Vagina (tissue), 2 donors: ENCODE measurements at regions of chr14 and their contacts with region 1.

Region 1: GRCh38 chr14:54773171-54773975 is 129.3 kb downstream of the GCH1 start:
- DNase-seq: peak in 1 of 2 donors; percentile 98
- H3K4me3 ChIP-seq: no peak overlapping the region
- H3K27ac ChIP-seq: peak overlapping the region; percentile 86
- H3K4me1 ChIP-seq: peaks cover 18% of the 10 kb centered on the region
- H3K27me3 ChIP-seq: no peaks in the 10 kb centered on the region
- CTCF ChIP-seq: peak; percentile 57 to 94 (median 63)
- POLR2A ChIP-seq: no peak

Region 2: DNA sequence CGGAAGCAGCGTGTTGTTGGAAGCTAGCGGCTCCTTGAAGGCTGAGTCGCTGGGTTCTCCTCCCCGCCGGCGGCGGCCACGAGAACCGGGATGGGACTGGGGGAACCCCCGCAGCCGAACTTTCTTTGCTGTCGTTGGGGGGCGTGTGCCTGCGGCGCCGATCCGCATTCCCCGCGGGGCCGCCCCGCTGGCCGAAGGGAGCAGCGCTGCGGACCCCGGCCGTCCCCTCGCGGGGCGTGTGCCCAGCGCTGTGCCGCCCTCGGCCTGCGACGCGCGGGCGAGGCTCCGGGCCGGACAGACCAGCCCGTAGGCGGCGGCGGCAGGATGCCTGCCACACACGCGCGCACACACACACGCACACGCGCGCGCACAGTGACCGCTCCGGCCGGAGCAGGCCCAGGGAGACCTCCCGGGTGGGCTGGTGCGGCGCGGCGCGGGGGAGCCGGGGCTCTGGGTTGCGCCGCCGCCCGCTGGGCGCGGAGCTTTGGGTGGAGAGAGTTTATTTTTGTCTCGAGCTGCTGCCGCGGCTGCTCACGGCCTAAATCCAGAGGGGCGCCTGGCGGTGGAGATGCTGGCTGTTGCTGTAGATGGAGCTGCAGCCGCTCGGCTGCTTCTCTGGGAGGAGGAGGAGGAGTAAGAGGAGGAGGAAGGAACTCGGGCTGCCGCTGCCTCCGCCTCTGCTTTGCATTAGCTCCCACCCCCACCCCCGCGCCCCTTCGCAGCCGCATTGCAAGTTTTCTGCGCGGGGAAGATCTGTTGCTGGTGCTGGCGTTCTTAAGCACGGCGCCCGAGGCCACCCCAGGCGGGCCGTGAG is 206.8 kb before region 1 on chr14 and contains the start of gene SAMD4A:
- intact Hi-C with region 1: loop called (anchors 1 kb)
- DNase-seq: peak in 1 of 2 donors; percentile 92
- H3K4me3 ChIP-seq: peak within 1 kb of the TSS; percentile 75 to 86
- H3K27ac ChIP-seq: peak within 1 kb of the TSS; percentile 99
- H3K4me1 ChIP-seq: peaks cover 39% of the 10 kb centered on the region
- H3K27me3 ChIP-seq: no peaks in the 10 kb centered on the region
- CTCF ChIP-seq: peak in 1 of 3 experiments; percentile 29
- POLR2A ChIP-seq: peak in 1 of 2 donors; percentile 58
- total RNA-seq, gene SAMD4A: 43.0 TPM

Region 3: DNA sequence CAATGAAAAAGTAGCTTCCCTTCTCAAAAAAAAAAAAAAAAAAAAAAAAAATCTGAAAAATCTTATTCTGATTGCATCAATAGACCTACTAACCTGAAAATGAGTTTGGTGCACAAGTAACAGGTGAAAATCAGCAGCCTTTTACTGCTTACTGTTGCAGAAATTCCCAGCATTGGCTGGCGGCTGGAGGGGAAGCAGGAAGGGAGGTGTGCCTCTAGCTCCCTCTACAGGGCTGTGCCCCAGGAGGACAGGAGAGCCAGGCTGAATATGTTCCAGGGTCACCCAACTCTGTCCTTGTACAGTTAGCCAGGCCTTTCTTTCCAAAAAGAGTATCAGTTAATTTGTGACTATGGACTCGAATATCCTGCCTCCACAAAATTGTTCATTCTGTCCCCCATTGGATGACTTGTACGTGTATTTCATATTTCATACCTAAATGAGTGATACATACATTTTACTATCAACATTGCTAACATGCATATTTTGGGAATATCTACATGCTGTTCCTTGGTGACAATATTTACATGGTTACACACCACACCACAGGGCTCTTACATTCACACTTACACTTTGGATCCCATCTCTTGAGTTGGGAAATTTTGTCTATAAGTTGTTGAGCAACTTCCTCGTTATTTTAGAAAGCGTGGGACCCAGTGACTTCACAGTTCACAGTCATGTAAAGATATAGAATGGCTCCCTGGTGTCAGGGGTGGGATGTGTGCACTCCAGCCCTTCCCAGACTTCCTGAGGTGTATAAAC is 81.7 kb before region 1 on chr14:
- intact Hi-C with region 1: loop called (anchors 5 kb)
- DNase-seq: no peak
- H3K4me3 ChIP-seq: no peak overlapping the region
- H3K27ac ChIP-seq: peak overlapping the region; percentile 30
- H3K4me1 ChIP-seq: peaks cover 35% of the 10 kb centered on the region
- H3K27me3 ChIP-seq: no peaks in the 10 kb centered on the region
- CTCF ChIP-seq: peak; percentile 63 to 80 (median 66)
- POLR2A ChIP-seq: no peak

Region 4: DNA sequence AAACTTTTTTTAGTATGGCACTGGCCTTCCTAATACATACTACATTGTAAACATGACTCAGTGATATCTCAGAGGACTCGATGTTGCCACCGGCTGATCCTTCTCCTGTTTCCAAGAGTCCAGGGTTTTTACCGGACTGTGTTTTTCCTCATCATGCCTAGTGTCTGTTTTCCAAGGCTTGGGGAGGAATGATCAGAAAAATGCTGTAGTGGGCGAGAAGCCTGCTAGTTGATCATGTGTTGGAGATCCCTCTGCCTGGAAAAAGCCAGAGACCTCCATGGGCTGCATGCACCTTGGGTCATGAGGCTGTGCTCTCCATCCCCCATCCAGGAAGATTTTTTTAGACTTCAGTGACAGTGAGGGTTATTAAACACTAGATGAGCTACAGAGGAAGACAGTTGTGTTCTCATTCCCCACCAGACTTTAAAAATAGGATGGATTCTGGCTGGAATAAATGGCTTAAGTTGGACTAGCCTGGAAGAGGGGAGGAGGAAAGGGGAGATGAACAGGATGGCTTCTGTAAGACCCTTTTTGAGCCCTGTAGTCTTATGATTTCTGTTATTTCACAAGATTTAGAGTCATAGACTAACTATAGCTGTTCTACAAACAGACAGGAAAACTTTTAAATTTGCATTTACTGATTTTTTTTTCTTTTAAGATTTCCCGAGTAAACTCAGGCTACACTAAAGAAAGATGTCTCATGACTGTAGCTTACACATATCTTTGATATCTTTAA is 60.7 kb before region 1 on chr14:
- intact Hi-C with region 1: loop called (anchors 5 kb)
- DNase-seq: no peak
- H3K4me3 ChIP-seq: no peak overlapping the region
- H3K27ac ChIP-seq: peak overlapping the region; percentile 70
- H3K4me1 ChIP-seq: peaks cover 53% of the 10 kb centered on the region
- H3K27me3 ChIP-seq: no peaks in the 10 kb centered on the region
- CTCF ChIP-seq: no peak
- POLR2A ChIP-seq: no peak